CD4-positive, alpha-beta memory T cell (primary cell): ENCODE measurements at regions of chr2 and their contacts with region 1.

Region 1: GRCh38 chr2:43293744-43294695 is 67.6 kb upstream of the ZFP36L2 start:
- DNase-seq: peak in 1 of 5 donors; percentile 43
- H3K4me3 ChIP-seq: no peak overlapping the region
- H3K4me3 Mint-ChIP-seq: no peak overlapping the region
- H3K27ac ChIP-seq: no peak overlapping the region
- H3K27ac Mint-ChIP-seq: peak overlapping the region in 3 of 7 donors; percentile 24 to 45 (median 29)
- H3K4me1 ChIP-seq: peaks cover 8% of the 10 kb centered on the region
- H3K4me1 Mint-ChIP-seq: peaks cover 11 to 20% (median 12%) of the 10 kb centered on the region in 4 donors
- H3K27me3 ChIP-seq: no peaks in the 10 kb centered on the region
- H3K27me3 Mint-ChIP-seq: no peaks in the 10 kb centered on the region

Region 2: DNA sequence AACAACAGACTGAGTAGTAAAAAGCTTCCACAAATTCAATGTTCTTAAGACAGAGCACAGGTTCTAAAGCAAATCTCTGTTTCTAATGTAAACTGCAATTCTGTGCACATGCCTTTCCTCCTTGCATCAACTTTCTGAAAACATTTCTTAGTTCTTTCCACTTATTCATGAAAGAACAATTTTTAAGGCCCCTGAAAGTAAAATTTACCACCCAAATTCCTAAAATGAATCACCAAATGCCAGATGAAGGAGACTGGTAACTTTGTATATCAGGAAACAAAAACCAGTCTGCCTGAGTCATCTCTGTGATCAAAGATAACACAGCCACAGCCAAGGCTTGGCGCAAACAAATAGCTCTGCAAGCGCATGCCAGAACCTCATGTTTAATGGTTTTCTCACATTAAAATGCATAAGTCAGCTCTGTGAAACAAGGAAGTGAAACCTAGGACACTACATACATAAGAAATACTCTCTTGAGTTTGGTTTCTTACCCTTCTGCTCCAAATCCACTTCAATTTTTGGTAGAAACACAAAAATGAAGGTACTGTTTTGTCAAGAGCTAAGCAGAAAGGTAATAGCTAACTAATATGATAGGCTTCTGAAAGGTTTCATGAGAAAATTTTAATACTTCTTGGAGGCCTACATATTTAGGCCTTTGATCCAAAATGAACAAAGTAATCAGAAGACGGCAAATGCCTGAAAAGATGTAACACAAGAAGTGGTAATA is 132.4 kb after region 1 on chr2:
- CTCF ChIA-PET with region 1: no interaction called
- POLR2A ChIA-PET with region 1: no interaction called
- intact Hi-C with region 1: loop called (anchors 5 kb)
- DNase-seq: peak; percentile 56 to 77 (median 61)
- H3K4me3 ChIP-seq: no peak overlapping the region
- H3K4me3 Mint-ChIP-seq: peak overlapping the region; percentile 1 to 81 (median 51)
- H3K27ac ChIP-seq: peak overlapping the region; percentile 20
- H3K27ac Mint-ChIP-seq: peak overlapping the region; percentile 3 to 92 (median 87)
- H3K4me1 ChIP-seq: peaks cover 39% of the 10 kb centered on the region
- H3K4me1 Mint-ChIP-seq: peaks cover 32 to 44% (median 37%) of the 10 kb centered on the region in 4 donors
- H3K27me3 ChIP-seq: no peaks in the 10 kb centered on the region
- H3K27me3 Mint-ChIP-seq: no peaks in the 10 kb centered on the region

Region 3: GRCh38 chr2:43542285-43542937 is 248.4 kb after region 1 on chr2:
- CTCF ChIA-PET with region 1: no interaction called
- POLR2A ChIA-PET with region 1: no interaction called
- intact Hi-C with region 1: no loop called
- DNase-seq: peak; percentile 9 to 62 (median 54)
- H3K4me3 ChIP-seq: no peak overlapping the region
- H3K4me3 Mint-ChIP-seq: no peak overlapping the region
- H3K27ac ChIP-seq: no peak overlapping the region
- H3K27ac Mint-ChIP-seq: no peak overlapping the region
- H3K4me1 ChIP-seq: peaks cover 9% of the 10 kb centered on the region
- H3K4me1 Mint-ChIP-seq: peaks cover 5 to 10% (median 9%) of the 10 kb centered on the region in 4 donors
- H3K27me3 ChIP-seq: no peaks in the 10 kb centered on the region
- H3K27me3 Mint-ChIP-seq: no peaks in the 10 kb centered on the region